CD8-positive, alpha-beta T cell (primary cell): ENCODE measurements at regions of chr3 and their contacts with region 1.

Region 1: DNA sequence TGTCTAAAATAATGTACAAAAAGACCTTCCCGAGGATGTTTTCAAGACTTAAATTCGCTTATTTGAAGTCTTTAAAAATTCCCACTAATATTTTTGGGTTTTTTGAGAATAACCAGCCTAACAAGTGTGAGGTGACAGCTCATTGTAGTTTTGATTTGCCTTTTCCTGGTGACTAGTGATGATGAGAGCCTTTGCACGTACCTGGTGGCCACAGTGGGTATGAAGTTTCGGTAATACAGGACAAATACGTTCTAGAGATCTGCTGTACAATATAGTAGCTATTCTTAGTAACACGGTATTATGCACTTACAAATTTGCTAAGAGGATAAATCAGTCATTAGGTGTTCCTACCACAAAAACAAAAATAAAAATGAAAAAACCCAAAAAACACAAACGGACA is 124.9 kb downstream of the GRM7 start:
- DNase-seq: no peak
- ATAC-seq: no peak
- H3K4me3 ChIP-seq: no peak overlapping the region
- H3K4me3 Mint-ChIP-seq: no peak overlapping the region
- H3K27ac ChIP-seq: no peak overlapping the region
- H3K27ac Mint-ChIP-seq: no peak overlapping the region
- H3K4me1 ChIP-seq: no peaks in the 10 kb centered on the region
- H3K4me1 Mint-ChIP-seq: no peaks in the 10 kb centered on the region
- H3K27me3 ChIP-seq: no peaks in the 10 kb centered on the region
- H3K27me3 Mint-ChIP-seq: no peaks in the 10 kb centered on the region
- CTCF ChIP-seq: no peak

Region 2: DNA sequence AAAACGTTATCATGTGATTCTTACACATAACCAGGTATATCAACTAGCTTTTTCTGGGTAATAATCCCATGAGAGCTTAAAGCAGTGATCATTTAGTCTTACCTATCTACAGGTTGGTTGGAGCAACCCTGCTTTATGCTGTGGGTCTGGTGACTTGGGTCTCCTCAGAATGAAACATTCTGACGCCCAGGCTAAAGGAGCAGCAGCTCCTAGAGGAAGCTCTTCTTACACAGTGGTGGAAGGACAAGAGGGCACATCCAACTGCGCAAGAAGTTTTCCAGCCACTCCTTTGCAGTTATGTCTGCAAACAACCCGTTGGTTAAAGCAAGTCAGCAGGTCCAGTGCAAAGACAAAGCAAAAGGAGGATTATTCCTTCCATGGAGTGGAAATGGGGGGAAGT is 1420.8 kb before region 1 on chr3:
- CTCF ChIA-PET with region 1: no interaction called
- POLR2A ChIA-PET with region 1: no interaction called
- intact Hi-C with region 1: no loop called
- DNase-seq: no peak
- ATAC-seq: no peak
- H3K4me3 ChIP-seq: no peak overlapping the region
- H3K4me3 Mint-ChIP-seq: no peak overlapping the region
- H3K27ac ChIP-seq: no peak overlapping the region
- H3K27ac Mint-ChIP-seq: no peak overlapping the region
- H3K4me1 ChIP-seq: no peaks in the 10 kb centered on the region
- H3K4me1 Mint-ChIP-seq: no peaks in the 10 kb centered on the region
- H3K27me3 ChIP-seq: no peaks in the 10 kb centered on the region
- H3K27me3 Mint-ChIP-seq: no peaks in the 10 kb centered on the region
- CTCF ChIP-seq: no peak

Region 3: DNA sequence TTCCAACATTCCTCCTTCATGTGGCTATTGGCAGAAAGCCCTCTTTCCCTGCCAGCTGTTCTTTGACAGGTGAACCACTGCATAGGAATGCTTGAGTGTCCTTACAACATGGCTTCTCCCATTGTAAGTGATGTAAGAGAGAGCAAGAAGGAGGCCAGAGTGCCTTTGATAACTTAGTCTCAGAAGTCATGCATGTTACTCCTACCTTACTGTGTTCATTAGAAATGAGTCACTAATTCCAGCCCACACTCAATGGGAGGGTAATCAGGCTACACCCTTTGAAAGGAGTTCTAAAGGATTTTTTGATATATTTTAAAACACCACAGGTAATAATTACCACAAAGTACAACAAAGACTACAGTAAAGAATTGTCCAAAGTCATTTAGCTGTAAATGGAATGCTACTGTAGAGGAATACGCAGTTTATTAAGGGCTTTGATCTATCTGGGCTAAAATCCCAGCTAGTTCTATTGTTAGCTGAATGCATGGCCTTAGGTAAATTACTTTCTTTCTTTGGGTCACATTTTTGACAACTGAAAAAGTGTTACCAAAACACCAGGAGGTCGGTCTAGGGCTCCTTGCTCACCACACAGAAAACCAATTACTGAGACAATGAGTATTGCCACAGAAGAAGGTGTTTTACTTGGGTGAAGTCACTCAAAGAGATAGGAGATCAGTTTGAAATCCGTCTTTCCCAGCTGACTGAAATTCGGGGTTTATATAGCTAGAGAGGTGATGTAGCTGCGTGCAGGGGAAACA is 30.0 kb after region 1 on chr3:
- CTCF ChIA-PET with region 1: no interaction called
- POLR2A ChIA-PET with region 1: no interaction called
- intact Hi-C with region 1: loop called in 1 of 2 experiments (anchors 1 kb)
- DNase-seq: no peak
- ATAC-seq: no peak
- H3K4me3 ChIP-seq: no peak overlapping the region
- H3K4me3 Mint-ChIP-seq: no peak overlapping the region
- H3K27ac ChIP-seq: no peak overlapping the region
- H3K27ac Mint-ChIP-seq: no peak overlapping the region
- H3K4me1 ChIP-seq: no peaks in the 10 kb centered on the region
- H3K4me1 Mint-ChIP-seq: no peaks in the 10 kb centered on the region
- H3K27me3 ChIP-seq: no peaks in the 10 kb centered on the region
- H3K27me3 Mint-ChIP-seq: no peaks in the 10 kb centered on the region
- CTCF ChIP-seq: no peak

Region 4: GRCh38 chr3:7095116-7095515 is 109.3 kb after region 1 on chr3:
- CTCF ChIA-PET with region 1: no interaction called
- POLR2A ChIA-PET with region 1: no interaction called
- intact Hi-C with region 1: no loop called
- DNase-seq: no peak
- ATAC-seq: no peak
- H3K4me3 ChIP-seq: no peak overlapping the region
- H3K4me3 Mint-ChIP-seq: no peak overlapping the region
- H3K27ac ChIP-seq: no peak overlapping the region
- H3K27ac Mint-ChIP-seq: no peak overlapping the region
- H3K4me1 ChIP-seq: no peaks in the 10 kb centered on the region
- H3K4me1 Mint-ChIP-seq: no peaks in the 10 kb centered on the region
- H3K27me3 ChIP-seq: no peaks in the 10 kb centered on the region
- H3K27me3 Mint-ChIP-seq: no peaks in the 10 kb centered on the region
- CTCF ChIP-seq: no peak

Region 5: DNA sequence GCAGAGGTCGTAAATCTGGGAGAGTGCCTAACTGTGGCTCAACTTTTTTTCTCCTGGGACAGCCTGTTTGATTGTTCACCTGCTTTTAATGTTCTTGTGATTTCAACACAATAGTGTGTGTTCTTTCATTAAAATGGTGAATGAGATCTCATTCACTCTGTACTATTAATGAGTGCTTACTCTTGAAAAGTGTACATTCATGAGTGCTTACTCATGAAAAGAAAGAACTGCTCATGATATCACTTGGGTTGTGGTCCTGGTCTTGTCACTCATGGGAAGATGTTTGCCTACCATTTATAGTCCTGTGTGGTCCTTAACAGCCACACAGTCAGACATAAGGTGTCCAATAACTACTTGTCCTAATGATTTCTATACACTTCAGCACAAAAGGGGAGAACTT is 442.5 kb after region 1 on chr3:
- CTCF ChIA-PET with region 1: no interaction called
- POLR2A ChIA-PET with region 1: no interaction called
- intact Hi-C with region 1: no loop called
- DNase-seq: no peak
- ATAC-seq: no peak
- H3K4me3 ChIP-seq: no peak overlapping the region
- H3K4me3 Mint-ChIP-seq: no peak overlapping the region
- H3K27ac ChIP-seq: no peak overlapping the region
- H3K27ac Mint-ChIP-seq: no peak overlapping the region
- H3K4me1 ChIP-seq: no peaks in the 10 kb centered on the region
- H3K4me1 Mint-ChIP-seq: no peaks in the 10 kb centered on the region
- H3K27me3 ChIP-seq: no peaks in the 10 kb centered on the region
- H3K27me3 Mint-ChIP-seq: no peaks in the 10 kb centered on the region
- CTCF ChIP-seq: no peak